ENCODE measurements at regions of chr11 and their contacts with region 1.

Region 1: GRCh38 chr11:66638177-66639065 is at the start of gene RBM4:
- DNase-seq: peak; percentile 98
- H3K4me3 Mint-ChIP-seq: peak within 1 kb of the TSS; percentile 91
- H3K27ac Mint-ChIP-seq: peak within 1 kb of the TSS; percentile 91
- H3K4me1 Mint-ChIP-seq: peaks cover 60% of the 10 kb centered on the region
- H3K27me3 Mint-ChIP-seq: no peaks in the 10 kb centered on the region
- total RNA-seq, gene RBM4: 109 to 110 TPM

Region 2: GRCh38 chr11:66480117-66480938 is 158.1 kb before region 1 on chr11 and contains the start of gene DPP3:
- CTCF ChIA-PET with region 1: no interaction called
- POLR2A ChIA-PET with region 1: interaction called, 12 read pairs
- DNase-seq: peak; percentile 97
- H3K4me3 Mint-ChIP-seq: peak within 1 kb of the TSS; percentile 78
- H3K27ac Mint-ChIP-seq: peak within 1 kb of the TSS; percentile 86
- H3K4me1 Mint-ChIP-seq: peaks cover 27% of the 10 kb centered on the region
- H3K27me3 Mint-ChIP-seq: no peaks in the 10 kb centered on the region
- total RNA-seq, gene DPP3: 59.3 to 60.6 TPM

Region 3: GRCh38 chr11:66592457-66593302 is 45.7 kb before region 1 on chr11 and contains the starts of genes CCDC87 and CCS:
- CTCF ChIA-PET with region 1: interaction called, 9 read pairs
- POLR2A ChIA-PET with region 1: interaction called, 38 read pairs
- DNase-seq: peak; percentile 99
- H3K4me3 Mint-ChIP-seq: peak within 1 kb of the TSS; percentile 100
- H3K27ac Mint-ChIP-seq: peak within 1 kb of the TSS; percentile 92
- H3K4me1 Mint-ChIP-seq: peaks cover 37% of the 10 kb centered on the region
- H3K27me3 Mint-ChIP-seq: no peaks in the 10 kb centered on the region
- total RNA-seq, gene CCDC87: not detected
- total RNA-seq, gene CCS: 32.8 to 33.2 TPM

Region 4: GRCh38 chr11:66625041-66625751 is 13.2 kb before region 1 on chr11:
- CTCF ChIA-PET with region 1: interaction called, 18 read pairs
- POLR2A ChIA-PET with region 1: interaction called, 125 read pairs
- DNase-seq: no peak
- H3K4me3 Mint-ChIP-seq: no peak overlapping the region
- H3K27ac Mint-ChIP-seq: no peak overlapping the region
- H3K4me1 Mint-ChIP-seq: peaks cover 36% of the 10 kb centered on the region
- H3K27me3 Mint-ChIP-seq: no peaks in the 10 kb centered on the region

Region 5: DNA sequence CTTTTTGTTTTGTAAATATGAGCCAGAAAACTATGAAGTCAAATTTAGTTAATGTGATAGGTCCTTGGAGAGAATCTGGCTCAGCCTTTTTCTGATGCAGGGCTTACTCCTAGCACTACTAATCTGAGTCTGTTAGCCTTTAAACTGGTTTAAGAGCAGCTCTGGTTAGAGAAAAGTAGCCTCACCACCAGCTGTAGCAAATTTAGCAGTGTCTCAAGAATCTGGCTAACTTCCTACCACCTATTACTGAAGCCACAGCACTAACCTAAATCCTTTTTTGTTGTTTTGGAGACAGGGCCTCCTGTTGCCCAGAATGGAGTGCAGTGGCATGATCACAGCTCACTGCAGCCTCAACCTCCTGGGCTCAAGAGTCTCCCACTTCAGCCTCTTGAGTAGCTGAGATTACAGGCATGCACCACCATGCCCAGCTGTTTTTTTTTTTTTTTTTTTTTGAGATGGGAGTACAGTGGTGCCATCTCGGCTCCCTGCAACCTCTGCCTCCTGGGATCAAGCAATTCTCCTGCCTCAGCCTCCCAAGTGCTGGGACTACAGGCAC is 25.4 kb after region 1 on chr11:
- CTCF ChIA-PET with region 1: interaction called, 7 read pairs
- POLR2A ChIA-PET with region 1: interaction called, 18 read pairs
- DNase-seq: no peak
- H3K4me3 Mint-ChIP-seq: no peak overlapping the region
- H3K27ac Mint-ChIP-seq: no peak overlapping the region
- H3K4me1 Mint-ChIP-seq: peaks cover 4% of the 10 kb centered on the region
- H3K27me3 Mint-ChIP-seq: no peaks in the 10 kb centered on the region

Region 6: GRCh38 chr11:66694732-66695207 is 56.3 kb after region 1 on chr11:
- CTCF ChIA-PET with region 1: no interaction called
- POLR2A ChIA-PET with region 1: no interaction called
- DNase-seq: peak; percentile 82
- H3K4me3 Mint-ChIP-seq: no peak overlapping the region
- H3K27ac Mint-ChIP-seq: no peak overlapping the region
- H3K4me1 Mint-ChIP-seq: no peaks in the 10 kb centered on the region
- H3K27me3 Mint-ChIP-seq: no peaks in the 10 kb centered on the region